GM12878 (cell line): ENCODE measurements at regions of chr9 and their contacts with region 1.

Region 1: GRCh38 chr9:114385412-114386181 is 2.2 kb downstream of the AKNA start:
- DNase-seq: peak; percentile 97
- ATAC-seq: peak; percentile 74
- H3K4me3 ChIP-seq: peak overlapping the region; percentile 93
- H3K27ac ChIP-seq: peak overlapping the region; percentile 100
- H3K4me1 ChIP-seq: peaks cover 66% of the 10 kb centered on the region
- H3K27me3 ChIP-seq: no peaks in the 10 kb centered on the region
- CTCF ChIP-seq: no peak; a peak in 1 of 6 replicates
- EP300 ChIP-seq: peak; percentile 90 to 95
- POLR2A ChIP-seq: peak; percentile 90
- RAD21 ChIP-seq: no peak

Region 2: DNA sequence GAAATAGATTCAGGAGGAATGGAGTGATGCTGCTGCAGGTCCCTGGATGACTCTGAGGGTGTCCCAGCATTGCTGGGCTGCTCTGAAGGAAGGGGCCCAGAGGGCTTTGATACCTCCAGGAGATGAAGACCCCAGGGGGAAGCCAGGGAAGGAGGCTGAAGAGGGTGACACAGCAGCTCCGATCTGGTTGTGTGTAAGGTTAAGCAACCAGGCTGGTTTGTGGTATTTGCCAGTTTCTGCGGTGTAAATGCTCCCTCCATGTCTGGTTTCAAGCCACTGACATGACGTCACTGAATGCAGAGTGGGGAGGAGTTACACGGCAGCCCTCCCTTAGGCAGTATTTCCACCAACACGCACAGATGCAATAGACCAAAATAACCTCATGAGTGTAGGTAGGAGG is 102.7 kb before region 1 on chr9:
- CTCF ChIA-PET with region 1: no interaction called
- POLR2A ChIA-PET with region 1: no interaction called
- RAD21 ChIA-PET with region 1: no interaction called
- SMC1A ChIA-PET with region 1: no interaction called
- in situ Hi-C with region 1: no loop called
- intact Hi-C with region 1: no loop called
- DNase-seq: no peak
- ATAC-seq: peak; percentile 74
- H3K4me3 ChIP-seq: no peak overlapping the region
- H3K27ac ChIP-seq: no peak overlapping the region
- H3K4me1 ChIP-seq: no peaks in the 10 kb centered on the region
- H3K27me3 ChIP-seq: peaks cover 0 to 3% of the 10 kb centered on the region in 2 experiments; a peak in 1 of 4 replicates
- CTCF ChIP-seq: no peak
- EP300 ChIP-seq: no peak
- POLR2A ChIP-seq: no peak
- RAD21 ChIP-seq: no peak

Region 3: DNA sequence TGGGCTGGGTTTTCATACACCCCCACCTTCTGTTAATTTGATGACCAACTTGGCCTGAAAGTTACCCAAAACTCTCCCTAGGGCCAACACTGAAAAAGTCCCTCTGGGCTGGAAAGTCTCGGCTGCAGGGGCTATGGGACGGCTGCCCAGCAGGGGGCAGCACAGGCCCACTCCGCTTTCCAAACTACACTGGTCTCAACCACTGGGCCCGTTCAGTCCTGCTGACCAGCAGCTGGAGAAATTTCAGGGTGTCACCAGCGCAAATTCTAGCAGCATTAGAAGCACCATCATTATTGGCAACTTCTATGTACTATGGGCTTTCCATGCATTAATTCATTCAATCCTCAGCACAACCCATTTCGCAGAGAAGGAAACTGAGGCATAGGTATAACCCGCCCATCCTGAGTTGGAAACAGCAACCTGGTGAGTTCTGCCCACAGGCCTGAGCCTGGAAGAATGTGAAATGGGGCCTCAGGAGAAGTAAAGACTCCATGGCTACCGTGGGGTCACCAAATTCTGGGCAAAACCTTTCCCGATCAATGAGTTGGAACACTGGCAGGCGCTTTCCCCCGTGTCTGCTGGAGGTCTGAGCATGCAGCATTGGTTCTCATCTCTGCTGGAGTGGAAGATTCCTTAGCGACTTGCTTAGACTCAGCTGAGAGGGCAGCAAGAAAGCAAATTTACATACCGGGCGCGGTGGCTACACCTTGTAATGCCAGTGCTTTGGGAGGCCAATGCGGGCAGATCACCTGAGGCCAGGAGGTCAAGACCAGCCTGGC is 46.3 kb before region 1 on chr9:
- CTCF ChIA-PET with region 1: interaction called, 122 read pairs
- POLR2A ChIA-PET with region 1: interaction called, 11 read pairs
- RAD21 ChIA-PET with region 1: interaction called, 52 read pairs
- SMC1A ChIA-PET with region 1: interaction called, 50 read pairs
- in situ Hi-C with region 1: no loop called
- intact Hi-C with region 1: loop called (anchors 1 kb)
- DNase-seq: peak; percentile 46
- ATAC-seq: peak; percentile 96
- H3K4me3 ChIP-seq: no peak overlapping the region
- H3K27ac ChIP-seq: no peak overlapping the region
- H3K4me1 ChIP-seq: peaks cover 6% of the 10 kb centered on the region; the same call in 1 of the 2 replicates
- H3K27me3 ChIP-seq: no peaks in the 10 kb centered on the region
- CTCF ChIP-seq: peak; percentile 89 to 96 (median 90); a peak in 5 of 6 replicates
- EP300 ChIP-seq: 0 out of 4 replicates have a peak, but pooled peaks of 1 of the 2 experiments have one; percentile 35
- POLR2A ChIP-seq: no peak; the same call in 1 of the 2 replicates
- RAD21 ChIP-seq: peak; percentile 75

Region 4: DNA sequence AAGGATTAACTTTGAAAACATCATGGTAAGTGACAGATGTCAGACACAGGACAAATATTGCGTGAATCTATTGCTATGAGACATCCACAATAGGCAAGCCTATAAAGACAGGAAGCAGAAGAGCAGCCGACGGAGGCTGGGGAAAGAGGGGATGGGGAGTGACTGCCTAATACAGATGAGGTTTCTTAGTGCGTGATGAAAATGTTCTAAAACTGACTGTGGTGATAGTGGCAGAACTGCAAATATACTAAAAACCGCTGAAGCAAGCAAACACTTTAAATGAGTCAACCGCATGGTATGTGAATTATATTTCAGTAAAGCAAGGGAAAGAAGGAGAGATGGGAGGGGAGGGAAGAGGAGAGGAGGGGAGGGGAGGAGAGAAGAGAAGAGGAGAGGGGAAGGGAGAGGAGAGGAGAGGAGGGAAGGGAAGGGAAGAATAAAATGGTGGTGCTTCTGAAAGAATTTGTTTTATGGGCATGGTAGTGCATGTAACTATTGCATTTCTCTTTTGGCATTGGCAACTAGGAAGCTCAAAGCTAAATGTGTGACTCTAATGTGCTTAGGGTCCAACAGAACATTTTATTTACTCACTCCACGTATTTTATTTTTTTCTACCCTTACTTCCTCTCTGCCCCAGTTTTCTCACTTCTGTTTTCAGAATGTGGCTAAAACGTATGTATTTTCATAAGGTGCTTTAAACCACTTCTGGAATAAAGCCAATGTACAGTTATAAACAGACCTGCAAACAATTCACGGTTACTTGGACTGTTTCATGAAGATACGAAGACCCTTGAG is 19.1 kb before region 1 on chr9:
- CTCF ChIA-PET with region 1: interaction called, 108 read pairs
- POLR2A ChIA-PET with region 1: interaction called, 312 read pairs
- RAD21 ChIA-PET with region 1: interaction called, 251 read pairs
- SMC1A ChIA-PET with region 1: interaction called, 327 read pairs
- in situ Hi-C with region 1: no loop called
- intact Hi-C with region 1: loop called (anchors 2 kb)
- DNase-seq: no peak
- ATAC-seq: peak; percentile 75
- H3K4me3 ChIP-seq: 0 out of 2 replicates have a peak overlapping the region, but pooled peaks have one; percentile 1
- H3K27ac ChIP-seq: peak overlapping the region; percentile 78
- H3K4me1 ChIP-seq: peaks cover 65% of the 10 kb centered on the region
- H3K27me3 ChIP-seq: no peaks in the 10 kb centered on the region
- CTCF ChIP-seq: no peak
- EP300 ChIP-seq: peak; percentile 61 to 79; a peak in 3 of 4 replicates
- POLR2A ChIP-seq: no peak
- RAD21 ChIP-seq: no peak

Region 5: DNA sequence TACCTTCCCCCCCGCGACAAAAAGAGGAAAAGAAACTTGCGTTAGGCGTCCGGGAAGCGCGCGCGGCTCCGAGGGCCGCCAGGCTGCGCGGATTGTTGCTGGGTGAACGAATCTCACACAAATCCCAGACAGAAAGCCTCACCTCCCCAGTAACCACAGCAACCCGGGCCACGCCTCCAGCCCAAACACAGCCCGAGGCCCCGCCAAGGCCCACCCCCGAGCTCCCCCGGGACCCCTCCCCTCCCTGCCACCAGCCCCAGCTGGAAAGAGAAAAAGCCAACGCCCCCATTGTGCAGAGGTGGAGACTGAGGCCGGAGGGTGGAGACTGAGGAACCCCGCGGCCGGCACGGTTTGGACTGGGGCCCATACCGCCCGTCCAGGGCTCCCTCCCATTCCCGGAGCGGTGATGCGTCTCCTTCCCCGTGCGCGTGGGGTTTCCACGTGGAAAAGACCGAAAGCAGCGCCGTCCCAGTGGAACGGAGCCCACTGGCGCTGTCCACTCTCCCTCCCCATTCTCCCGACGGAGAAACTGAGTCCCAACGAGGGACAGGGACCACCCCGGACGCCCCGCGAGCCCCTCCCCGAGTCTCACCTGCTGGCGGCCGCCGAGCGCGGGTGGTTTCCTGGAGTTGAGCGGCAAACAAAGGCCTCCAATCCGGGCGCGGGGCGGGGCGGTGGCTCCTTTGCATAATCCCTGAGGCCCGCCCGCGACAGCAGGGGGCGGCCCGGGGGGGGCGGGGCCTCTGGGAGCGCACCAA is 12.4 kb after region 1 on chr9:
- CTCF ChIA-PET with region 1: interaction called, 49 read pairs
- POLR2A ChIA-PET with region 1: interaction called, 127 read pairs
- RAD21 ChIA-PET with region 1: interaction called, 136 read pairs
- SMC1A ChIA-PET with region 1: interaction called, 87 read pairs
- in situ Hi-C with region 1: no loop called
- intact Hi-C with region 1: loop called (anchors 1 kb)
- DNase-seq: peak; percentile 80
- ATAC-seq: peak; percentile 89
- H3K4me3 ChIP-seq: peak overlapping the region; percentile 95
- H3K27ac ChIP-seq: peak overlapping the region; percentile 87
- H3K4me1 ChIP-seq: peaks cover 21% of the 10 kb centered on the region
- H3K27me3 ChIP-seq: no peaks in the 10 kb centered on the region
- CTCF ChIP-seq: 0 out of 6 replicates have a peak, but pooled peaks of 1 of the 3 experiments have one; percentile 1
- EP300 ChIP-seq: peak; percentile 51 to 62; a peak in 2 of 4 replicates
- POLR2A ChIP-seq: peak; percentile 81
- RAD21 ChIP-seq: 0 out of 2 replicates have a peak, but pooled peaks have one; percentile 12

Region 6: DNA sequence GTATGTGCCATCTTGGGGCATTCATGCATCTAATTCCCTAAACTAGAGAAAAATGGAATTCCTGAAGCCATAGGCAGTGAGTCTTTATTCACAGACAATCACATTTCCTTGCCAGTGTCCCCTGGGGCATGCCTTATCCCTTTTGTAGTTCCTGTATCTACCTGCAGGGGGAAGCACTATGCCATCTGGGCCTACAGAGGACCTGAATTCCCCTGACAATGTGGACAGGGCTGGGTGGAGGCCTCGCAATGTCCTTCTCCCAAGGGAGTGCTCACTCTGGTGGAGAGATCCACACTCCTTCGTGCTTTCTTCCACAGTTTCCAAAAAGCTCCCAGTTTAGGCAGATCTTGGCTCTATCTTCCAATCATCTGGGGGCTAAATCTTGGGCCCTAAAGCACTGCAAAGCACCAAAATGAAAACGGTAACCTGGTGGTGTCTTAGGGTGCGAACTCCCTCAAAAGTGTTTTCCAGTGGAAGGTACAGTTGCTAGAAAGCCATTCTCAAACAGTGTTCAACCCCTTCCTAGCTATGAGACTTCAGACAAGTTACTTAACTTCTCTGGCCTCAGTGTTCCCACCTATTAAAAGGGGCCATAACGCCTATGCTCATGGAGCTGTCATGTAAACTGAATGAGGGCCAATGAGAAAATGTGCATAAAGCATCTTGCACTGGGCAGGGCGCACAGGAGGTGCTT is 102.2 kb after region 1 on chr9:
- CTCF ChIA-PET with region 1: interaction called, 3 read pairs
- POLR2A ChIA-PET with region 1: interaction called, 15 read pairs
- RAD21 ChIA-PET with region 1: interaction called, 6 read pairs
- SMC1A ChIA-PET with region 1: interaction called, 6 read pairs
- in situ Hi-C with region 1: no loop called
- intact Hi-C with region 1: no loop called
- DNase-seq: peak; percentile 34
- ATAC-seq: peak; percentile 80
- H3K4me3 ChIP-seq: no peak overlapping the region
- H3K27ac ChIP-seq: no peak overlapping the region
- H3K4me1 ChIP-seq: peaks cover 15% of the 10 kb centered on the region
- H3K27me3 ChIP-seq: no peaks in the 10 kb centered on the region
- CTCF ChIP-seq: peak; percentile 90 to 93 (median 93); a peak in 5 of 6 replicates
- EP300 ChIP-seq: no peak
- POLR2A ChIP-seq: no peak
- RAD21 ChIP-seq: peak; percentile 85

Region 7: GRCh38 chr9:114696814-114697544 is 311.4 kb after region 1 on chr9:
- CTCF ChIA-PET with region 1: no interaction called
- POLR2A ChIA-PET with region 1: no interaction called
- RAD21 ChIA-PET with region 1: no interaction called
- SMC1A ChIA-PET with region 1: no interaction called
- in situ Hi-C with region 1: no loop called
- intact Hi-C with region 1: no loop called
- DNase-seq: peak; percentile 65
- ATAC-seq: peak; percentile 86
- H3K4me3 ChIP-seq: 0 out of 2 replicates have a peak overlapping the region, but pooled peaks have one; percentile 2
- H3K27ac ChIP-seq: peak overlapping the region; percentile 14; the same call in 1 of the 2 replicates
- H3K4me1 ChIP-seq: peaks cover 39% of the 10 kb centered on the region
- H3K27me3 ChIP-seq: peaks cover 3 to 8% of the 10 kb centered on the region in 2 experiments; a peak in 3 of 4 replicates
- CTCF ChIP-seq: no peak
- EP300 ChIP-seq: peak; percentile 54 to 57; a peak in 3 of 4 replicates
- POLR2A ChIP-seq: no peak
- RAD21 ChIP-seq: no peak